Activated CD4-positive, alpha-beta T cell treated with anti-CD3 and anti-CD28 coated beads for 36 hours (primary cell): ENCODE measurements at regions of chr14 and their contacts with region 1.

Region 1: GRCh38 chr14:26794731-26795130 is 196.9 kb upstream of the NOVA1 start:
- DNase-seq: no peak
- ATAC-seq: no peak
- H3K4me3 Mint-ChIP-seq: no peak overlapping the region
- H3K27ac Mint-ChIP-seq: no peak overlapping the region
- H3K4me1 Mint-ChIP-seq: no peaks in the 10 kb centered on the region
- H3K27me3 Mint-ChIP-seq: no peaks in the 10 kb centered on the region

Region 2: GRCh38 chr14:26363689-26364088 is 431.0 kb before region 1 on chr14:
- CTCF ChIA-PET with region 1: no interaction called
- POLR2A ChIA-PET with region 1: no interaction called
- intact Hi-C with region 1: loop called in 1 of 2 experiments (anchors 5 kb)
- DNase-seq: no peak
- ATAC-seq: no peak
- H3K4me3 Mint-ChIP-seq: no peak overlapping the region
- H3K27ac Mint-ChIP-seq: no peak overlapping the region
- H3K4me1 Mint-ChIP-seq: no peaks in the 10 kb centered on the region
- H3K27me3 Mint-ChIP-seq: no peaks in the 10 kb centered on the region